Activated CD8-positive, alpha-beta memory T cell treated with anti-CD3 and anti-CD28 coated beads, Interleukin-2, amount 10 ng/mL, durations not matched to agents 7 days and 5 days (primary cell): ENCODE measurements at regions of chr21 and their contacts with region 1.

Region 1: GRCh38 chr21:44304877-44305293 is 5.0 kb downstream of the PFKL start:
- DNase-seq: peak; percentile 57
- ATAC-seq: peak; percentile 32
- H3K4me3 Mint-ChIP-seq: no peak overlapping the region
- H3K27ac Mint-ChIP-seq: no peak overlapping the region
- H3K4me1 Mint-ChIP-seq: peaks cover 28% of the 10 kb centered on the region
- H3K27me3 Mint-ChIP-seq: no peaks in the 10 kb centered on the region

Region 2: DNA sequence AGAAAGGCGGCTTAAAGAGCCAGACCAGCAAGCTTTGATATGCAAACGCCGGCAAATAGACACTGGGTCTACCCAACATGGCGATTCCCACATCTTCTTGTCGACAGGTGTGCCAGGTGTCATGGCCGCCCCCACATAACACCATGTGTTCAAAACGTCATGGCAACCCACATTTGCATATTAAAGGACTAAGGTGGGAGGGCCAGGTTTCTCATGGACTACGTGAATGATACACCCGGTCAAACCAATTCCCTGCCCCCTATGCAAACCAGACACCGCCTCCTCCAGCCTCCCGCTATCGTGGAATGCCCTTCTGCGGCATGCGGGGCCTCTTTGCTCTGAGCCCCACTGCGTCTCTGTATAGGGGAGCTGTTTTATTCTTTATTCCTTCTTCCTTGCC is 105.4 kb before region 1 on chr21:
- CTCF ChIA-PET with region 1: no interaction called
- DNase-seq: no peak
- ATAC-seq: no peak
- H3K4me3 Mint-ChIP-seq: no peak overlapping the region
- H3K27ac Mint-ChIP-seq: no peak overlapping the region
- H3K4me1 Mint-ChIP-seq: peaks cover 6% of the 10 kb centered on the region
- H3K27me3 Mint-ChIP-seq: no peaks in the 10 kb centered on the region

Region 3: GRCh38 chr21:44480200-44481053 is 175.5 kb after region 1 on chr21:
- CTCF ChIA-PET with region 1: interaction called, 10 read pairs
- DNase-seq: no peak
- ATAC-seq: no peak
- H3K4me3 Mint-ChIP-seq: no peak overlapping the region
- H3K27ac Mint-ChIP-seq: no peak overlapping the region
- H3K4me1 Mint-ChIP-seq: peaks cover 6% of the 10 kb centered on the region
- H3K27me3 Mint-ChIP-seq: peaks cover 8% of the 10 kb centered on the region

Region 4: DNA sequence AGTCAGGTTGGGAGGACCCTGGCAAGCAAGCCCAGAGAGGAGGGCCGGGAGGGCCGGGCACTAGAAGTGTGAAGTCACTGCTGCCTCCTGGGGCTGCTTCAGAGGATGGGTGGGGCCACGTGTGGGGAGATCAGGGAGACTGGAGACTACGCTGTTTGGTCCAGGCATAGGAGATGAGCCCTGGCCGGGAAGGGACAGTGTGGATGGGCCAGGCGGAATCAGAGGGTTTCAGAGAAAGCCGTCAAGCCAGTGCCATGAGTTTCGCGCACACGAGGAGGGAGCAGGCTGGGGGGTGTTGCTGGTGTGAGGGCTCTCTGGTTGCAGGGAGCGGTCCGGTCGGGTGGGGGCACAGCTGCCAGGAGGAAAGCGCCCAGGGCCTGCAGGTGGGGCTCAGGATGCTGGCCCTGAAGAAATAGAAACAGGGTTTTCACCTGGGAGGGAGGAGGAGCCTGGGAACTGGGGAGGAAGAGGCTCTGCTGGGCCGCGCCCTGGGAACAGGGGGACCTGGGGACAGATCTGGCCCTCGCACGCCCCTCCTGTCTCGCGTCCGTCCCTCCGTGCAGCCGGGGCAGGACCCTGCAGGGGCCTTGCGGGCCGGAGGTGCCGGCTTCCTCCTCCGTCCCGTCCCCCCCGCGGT is 1099.3 kb after region 1 on chr21:
- CTCF ChIA-PET with region 1: no interaction called
- DNase-seq: no peak
- ATAC-seq: peak; percentile 13
- H3K4me3 Mint-ChIP-seq: peak overlapping the region; percentile 16
- H3K27ac Mint-ChIP-seq: no peak overlapping the region
- H3K4me1 Mint-ChIP-seq: peaks cover 8% of the 10 kb centered on the region
- H3K27me3 Mint-ChIP-seq: peaks cover 68% of the 10 kb centered on the region